IMR-90 (cell line): ENCODE measurements at regions of chr11 and their contacts with region 1.

Region 1: GRCh38 chr11:118359295-118359958 is at the start of gene UBE4A:
- DNase-seq: peak; percentile 93
- ATAC-seq: peak; percentile 88
- H3K4me3 ChIP-seq: peak within 1 kb of the TSS; percentile 78
- H3K27ac ChIP-seq: peak within 1 kb of the TSS; percentile 75
- H3K4me1 ChIP-seq: peaks cover 2% of the 10 kb centered on the region; the same call in 1 of the 2 replicates
- H3K27me3 ChIP-seq: no peaks in the 10 kb centered on the region
- CTCF ChIP-seq: no peak
- POLR2A ChIP-seq: peak; percentile 80
- RAD21 ChIP-seq: no peak
- total RNA-seq, gene UBE4A: 69.7 and 71.1 TPM in 2 replicates

Region 2: DNA sequence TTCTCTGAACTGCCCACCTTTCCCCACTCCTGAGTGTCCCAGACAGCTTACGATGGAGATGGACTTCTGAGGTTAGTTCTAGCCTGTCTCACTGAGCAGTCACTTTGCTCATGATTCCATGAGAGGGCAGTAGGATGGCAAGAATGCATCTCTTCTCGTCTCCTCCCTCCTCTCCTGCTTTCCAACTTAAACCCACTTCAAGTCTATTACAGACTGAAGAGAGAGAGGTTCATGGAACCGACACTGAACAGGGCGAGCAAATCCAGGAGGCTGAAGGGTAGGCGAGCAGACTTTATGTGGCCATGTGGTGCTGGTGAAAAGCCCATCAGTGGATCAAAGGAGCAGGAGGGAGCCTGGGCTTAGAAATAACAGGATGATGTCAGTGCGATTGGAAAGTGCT is 993.2 kb before region 1 on chr11:
- CTCF ChIA-PET with region 1: no interaction called
- POLR2A ChIA-PET with region 1: no interaction called
- dilution Hi-C with region 1: no loop called
- in situ Hi-C with region 1: loop called (anchors 25 kb)
- intact Hi-C with region 1: no loop called
- DNase-seq: no peak
- ATAC-seq: no peak
- H3K4me3 ChIP-seq: no peak overlapping the region
- H3K27ac ChIP-seq: no peak overlapping the region
- H3K4me1 ChIP-seq: 0 out of 2 replicates have a peak, but pooled peaks cover 2% of the 10 kb centered on the region
- H3K27me3 ChIP-seq: no peaks in the 10 kb centered on the region
- CTCF ChIP-seq: no peak
- POLR2A ChIP-seq: no peak
- RAD21 ChIP-seq: no peak